ENCODE measurements at regions of chr2 and their contacts with region 1.

Region 1: GRCh38 chr2:154495455-154495868 is 203.0 kb upstream of the KCNJ3 start:
- DNase-seq: no peak
- H3K4me3 ChIP-seq: no peak overlapping the region
- H3K27ac ChIP-seq: no peak overlapping the region
- H3K4me1 ChIP-seq: no peaks in the 10 kb centered on the region
- H3K27me3 ChIP-seq: no peaks in the 10 kb centered on the region
- CTCF ChIP-seq: no peak
- EP300 ChIP-seq: no peak
- POLR2A ChIP-seq: no peak

Region 2: DNA sequence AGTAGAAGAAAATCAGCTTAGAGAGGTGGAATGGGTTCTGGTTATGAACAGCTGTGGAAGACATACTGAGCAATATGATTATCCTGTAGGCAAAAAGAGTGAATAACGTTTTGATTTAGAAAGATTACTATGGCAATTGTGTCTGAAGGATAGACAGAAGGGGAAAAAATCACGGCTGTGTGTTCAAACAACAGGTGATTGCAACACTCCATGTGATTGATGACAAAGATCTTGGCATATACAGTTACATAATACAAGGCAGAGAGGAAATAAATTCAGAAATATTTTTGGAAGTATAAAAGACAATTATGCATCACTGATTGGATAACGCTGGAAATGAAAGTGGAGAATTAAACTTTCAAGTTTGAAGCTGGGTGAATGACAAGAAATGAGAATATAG is 144.5 kb after region 1 on chr2:
- intact Hi-C with region 1: no loop called
- DNase-seq: no peak
- H3K4me3 ChIP-seq: no peak overlapping the region
- H3K27ac ChIP-seq: no peak overlapping the region
- H3K4me1 ChIP-seq: no peaks in the 10 kb centered on the region
- H3K27me3 ChIP-seq: no peaks in the 10 kb centered on the region
- CTCF ChIP-seq: no peak
- EP300 ChIP-seq: no peak
- POLR2A ChIP-seq: no peak

Region 3: GRCh38 chr2:154720651-154721050 is 225.2 kb after region 1 on chr2:
- intact Hi-C with region 1: no loop called
- DNase-seq: no peak
- H3K4me3 ChIP-seq: no peak overlapping the region
- H3K27ac ChIP-seq: no peak overlapping the region
- H3K4me1 ChIP-seq: no peaks in the 10 kb centered on the region
- H3K27me3 ChIP-seq: no peaks in the 10 kb centered on the region
- CTCF ChIP-seq: no peak
- EP300 ChIP-seq: no peak
- POLR2A ChIP-seq: no peak

Region 4: DNA sequence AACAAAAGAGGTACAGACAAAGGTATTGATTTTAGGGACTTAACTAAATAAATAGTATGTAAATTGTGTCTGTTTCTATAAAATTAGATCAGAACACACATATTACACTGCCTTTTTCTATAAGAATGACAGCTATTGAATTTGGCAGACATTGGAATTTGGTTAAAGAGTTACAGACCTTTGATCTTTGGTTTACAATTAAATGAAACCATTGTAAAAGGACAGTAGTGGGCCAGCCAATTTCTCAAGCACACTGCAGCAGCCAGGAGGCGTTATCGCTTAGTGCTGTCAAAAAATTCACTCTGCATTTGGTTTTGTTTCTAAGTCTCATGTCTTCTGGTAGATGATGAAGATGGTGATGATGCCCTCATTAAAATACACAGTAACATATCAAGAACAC is 1661.1 kb after region 1 on chr2:
- intact Hi-C with region 1: loop called in 1 of 4 experiments (anchors 10 kb)
- DNase-seq: no peak
- H3K4me3 ChIP-seq: no peak overlapping the region
- H3K27ac ChIP-seq: no peak overlapping the region
- H3K4me1 ChIP-seq: no peaks in the 10 kb centered on the region
- H3K27me3 ChIP-seq: no peaks in the 10 kb centered on the region
- CTCF ChIP-seq: no peak
- EP300 ChIP-seq: no peak
- POLR2A ChIP-seq: no peak

Measured in ovary (tissue), 10 donors.